ENCODE measurements at regions of chr9 and their contacts with region 1.

Region 1: DNA sequence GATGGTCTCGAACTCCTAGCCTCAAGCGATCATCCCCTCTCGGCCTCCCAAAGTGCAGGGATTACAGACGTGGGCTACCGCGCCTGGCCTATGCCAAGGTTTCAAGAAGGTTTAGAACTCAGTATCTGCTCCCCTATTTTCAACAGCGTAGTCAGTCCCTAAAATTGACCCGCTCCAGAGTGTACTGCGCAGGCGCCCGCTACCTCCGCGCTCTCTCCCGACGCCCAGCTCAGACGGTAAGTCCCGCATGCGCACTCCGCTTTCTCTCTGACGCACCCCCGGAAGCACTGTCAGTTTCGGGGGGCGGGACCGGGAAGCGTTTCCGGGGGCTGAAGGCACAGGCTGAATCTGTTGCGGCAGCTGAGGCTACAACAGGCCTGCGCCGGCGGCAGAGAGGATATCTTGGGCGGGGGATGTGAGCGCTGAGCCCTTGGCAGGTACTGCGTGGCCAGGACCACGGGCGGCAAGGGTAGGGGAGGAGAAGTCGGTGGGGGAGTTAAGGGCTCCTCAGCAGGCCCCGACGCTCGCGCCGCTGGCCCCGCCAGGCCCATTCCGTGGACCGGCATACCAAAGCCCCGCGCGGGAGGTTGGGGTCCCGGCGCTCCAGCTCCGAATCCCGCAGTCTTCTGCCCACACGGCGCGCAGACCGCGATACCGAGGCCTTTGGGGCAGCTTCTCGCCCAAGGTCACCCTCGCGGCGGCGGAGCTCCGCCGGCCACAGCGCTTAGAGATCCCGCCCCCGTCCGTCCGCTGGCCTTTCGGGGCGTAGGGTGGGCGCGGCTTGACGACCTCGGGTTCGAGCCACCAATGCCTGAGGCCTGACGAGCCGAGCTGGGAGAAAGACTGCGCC is at the start of gene ZBTB43:
- DNase-seq: peak; percentile 96
- H3K4me3 Mint-ChIP-seq: peak within 1 kb of the TSS; percentile 92
- H3K27ac Mint-ChIP-seq: peak within 1 kb of the TSS; percentile 95
- H3K4me1 Mint-ChIP-seq: peaks cover 29% of the 10 kb centered on the region
- H3K27me3 Mint-ChIP-seq: no peaks in the 10 kb centered on the region
- CTCF ChIP-seq: no peak
- total RNA-seq, gene ZBTB43: 32.4 and 44.2 TPM in 2 replicates

Region 2: GRCh38 chr9:126611592-126612325 is 193.2 kb before region 1 on chr9:
- CTCF ChIA-PET with region 1: interaction called, 3 read pairs
- POLR2A ChIA-PET with region 1: interaction called, 20 read pairs
- intact Hi-C with region 1: no loop called
- DNase-seq: peak; percentile 64
- H3K4me3 Mint-ChIP-seq: peak overlapping the region; percentile 2
- H3K27ac Mint-ChIP-seq: no peak overlapping the region
- H3K4me1 Mint-ChIP-seq: peaks cover 11% of the 10 kb centered on the region
- H3K27me3 Mint-ChIP-seq: peaks cover 14% of the 10 kb centered on the region
- CTCF ChIP-seq: peak; percentile 83

Region 3: DNA sequence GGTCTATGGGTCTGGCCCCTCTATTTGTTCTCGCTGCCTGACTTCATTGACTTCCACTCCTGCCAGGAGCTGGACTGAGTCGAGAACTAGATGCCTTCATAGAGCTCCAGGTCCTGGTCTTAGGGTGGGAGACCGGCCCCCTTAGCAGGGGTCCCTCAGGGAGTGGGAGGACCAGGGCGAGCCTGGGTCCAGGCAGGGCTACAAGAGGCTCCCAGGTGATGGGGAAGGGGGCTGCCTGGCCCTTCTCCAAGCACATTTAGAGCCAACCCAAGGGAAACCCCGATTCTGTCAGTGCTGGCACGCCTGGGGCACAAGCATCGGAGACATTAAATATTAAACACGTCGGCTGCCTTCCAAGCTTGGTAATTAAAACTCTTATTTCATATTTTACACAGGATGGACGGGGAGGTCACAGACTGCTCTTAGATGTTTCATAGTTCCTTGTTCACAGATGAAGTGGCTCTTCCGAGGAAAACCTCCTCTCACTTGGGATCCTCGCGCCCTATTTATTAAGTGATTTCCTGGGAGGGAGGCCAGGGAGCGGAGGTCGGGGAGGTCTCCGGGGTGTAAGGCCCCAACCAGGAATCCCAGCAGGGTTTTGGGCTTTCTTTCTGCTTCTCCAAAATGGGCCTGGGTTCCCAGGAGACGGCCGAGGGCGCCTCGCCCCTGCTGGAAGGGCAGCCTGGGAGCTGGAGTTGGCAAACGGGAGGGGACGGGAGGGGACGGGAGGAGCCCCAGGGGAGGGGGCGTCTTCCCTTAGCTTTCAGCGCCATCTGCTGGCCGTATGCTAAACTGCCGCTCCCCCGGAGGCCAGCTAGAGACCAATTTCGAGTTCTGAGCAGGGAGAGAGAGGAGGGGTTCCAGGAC is 23.5 kb before region 1 on chr9:
- CTCF ChIA-PET with region 1: interaction called, 3 read pairs
- POLR2A ChIA-PET with region 1: interaction called, 19 read pairs
- intact Hi-C with region 1: no loop called
- DNase-seq: peak; percentile 79
- H3K4me3 Mint-ChIP-seq: no peak overlapping the region
- H3K27ac Mint-ChIP-seq: no peak overlapping the region
- H3K4me1 Mint-ChIP-seq: peaks cover 5% of the 10 kb centered on the region
- H3K27me3 Mint-ChIP-seq: no peaks in the 10 kb centered on the region
- CTCF ChIP-seq: peak; percentile 97

Region 4: GRCh38 chr9:126791406-126792151 is 13.3 kb before region 1 on chr9:
- CTCF ChIA-PET with region 1: interaction called, 9 read pairs
- POLR2A ChIA-PET with region 1: interaction called, 700 read pairs
- intact Hi-C with region 1: loop called (anchors 1 kb)
- DNase-seq: peak; percentile 97
- H3K4me3 Mint-ChIP-seq: peak overlapping the region; percentile 63
- H3K27ac Mint-ChIP-seq: peak overlapping the region; percentile 99
- H3K4me1 Mint-ChIP-seq: peaks cover 58% of the 10 kb centered on the region
- H3K27me3 Mint-ChIP-seq: no peaks in the 10 kb centered on the region
- CTCF ChIP-seq: no peak

Region 5: DNA sequence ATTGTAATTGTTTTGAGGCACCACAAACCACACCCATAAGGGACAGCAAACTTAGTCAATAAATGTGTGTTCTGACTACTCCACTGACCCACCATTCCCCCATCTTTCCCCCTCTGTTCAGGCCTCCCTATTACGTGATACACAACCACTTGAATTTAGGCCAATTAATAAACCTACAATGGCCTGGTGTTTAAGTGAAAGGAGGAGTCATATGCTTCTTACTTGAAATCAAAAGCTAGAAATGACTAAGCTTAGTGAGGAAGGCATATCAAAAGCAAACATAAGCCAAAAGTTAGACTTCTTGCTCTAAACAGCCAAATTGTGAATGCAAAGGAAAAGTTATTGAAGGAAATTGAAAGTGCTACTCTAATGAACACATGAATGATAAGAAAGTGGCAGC is 14.6 kb after region 1 on chr9:
- CTCF ChIA-PET with region 1: interaction called, 3 read pairs
- POLR2A ChIA-PET with region 1: interaction called, 11 read pairs
- intact Hi-C with region 1: no loop called
- DNase-seq: no peak
- H3K4me3 Mint-ChIP-seq: no peak overlapping the region
- H3K27ac Mint-ChIP-seq: no peak overlapping the region
- H3K4me1 Mint-ChIP-seq: peaks cover 13% of the 10 kb centered on the region
- H3K27me3 Mint-ChIP-seq: no peaks in the 10 kb centered on the region
- CTCF ChIP-seq: no peak

Region 6: GRCh38 chr9:126860077-126860756 is 55.3 kb after region 1 on chr9 and contains the start of gene ZBTB34:
- CTCF ChIA-PET with region 1: interaction called, 3 read pairs
- POLR2A ChIA-PET with region 1: interaction called, 12 read pairs
- intact Hi-C with region 1: no loop called
- DNase-seq: peak; percentile 52
- H3K4me3 Mint-ChIP-seq: peak within 1 kb of the TSS; percentile 75
- H3K27ac Mint-ChIP-seq: peak within 1 kb of the TSS; percentile 66
- H3K4me1 Mint-ChIP-seq: peaks cover 28% of the 10 kb centered on the region
- H3K27me3 Mint-ChIP-seq: no peaks in the 10 kb centered on the region
- CTCF ChIP-seq: peak; percentile 99
- total RNA-seq, gene ZBTB34: 4.6 and 6.9 TPM in 2 replicates

Region 7: DNA sequence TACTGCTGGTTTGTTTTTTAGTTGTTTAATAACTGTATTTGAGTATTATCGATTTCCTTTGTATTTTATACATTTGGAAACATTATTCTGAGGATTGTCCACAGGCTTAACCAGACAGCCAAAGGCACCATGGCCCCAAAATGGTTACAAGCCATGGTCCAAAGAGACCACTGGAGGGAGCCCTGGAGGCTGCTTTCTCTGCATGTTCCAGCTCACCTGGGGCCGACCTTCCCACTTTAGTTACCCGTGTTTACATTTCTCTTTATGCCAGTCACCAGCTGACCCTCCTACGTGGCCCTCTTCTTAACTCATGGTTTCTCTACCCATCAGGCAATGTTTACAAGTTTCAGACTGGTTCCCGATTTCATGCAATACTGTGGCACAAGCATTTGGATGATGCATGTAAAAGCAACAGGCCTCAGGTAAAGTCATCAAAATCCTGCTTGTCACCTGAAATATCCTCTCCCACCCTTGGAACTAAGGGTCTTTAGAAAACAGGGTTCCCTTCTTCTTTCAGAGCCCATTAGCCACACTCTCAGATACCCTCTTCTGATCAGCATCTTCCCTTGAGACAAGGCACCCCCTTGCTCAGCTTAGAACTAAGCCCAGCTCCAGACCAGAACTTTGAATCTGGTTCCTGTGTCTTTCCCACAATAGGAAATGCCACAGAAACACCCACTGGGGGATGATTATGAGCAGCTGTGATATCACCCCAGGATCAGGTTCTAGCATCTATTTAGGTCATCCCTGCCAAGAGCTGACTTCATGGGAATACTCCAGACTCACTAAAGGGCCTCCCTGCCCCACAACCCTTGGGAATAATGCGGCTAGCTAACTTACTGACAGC is 409.7 kb after region 1 on chr9:
- CTCF ChIA-PET with region 1: no interaction called
- POLR2A ChIA-PET with region 1: no interaction called
- intact Hi-C with region 1: no loop called
- DNase-seq: peak; percentile 76
- H3K4me3 Mint-ChIP-seq: no peak overlapping the region
- H3K27ac Mint-ChIP-seq: no peak overlapping the region
- H3K4me1 Mint-ChIP-seq: peaks cover 6% of the 10 kb centered on the region
- H3K27me3 Mint-ChIP-seq: peaks cover 12% of the 10 kb centered on the region
- CTCF ChIP-seq: peak; percentile 73